Caco-2 (cell line): ENCODE measurements at regions of chr22 and their contacts with region 1.

Region 1: DNA sequence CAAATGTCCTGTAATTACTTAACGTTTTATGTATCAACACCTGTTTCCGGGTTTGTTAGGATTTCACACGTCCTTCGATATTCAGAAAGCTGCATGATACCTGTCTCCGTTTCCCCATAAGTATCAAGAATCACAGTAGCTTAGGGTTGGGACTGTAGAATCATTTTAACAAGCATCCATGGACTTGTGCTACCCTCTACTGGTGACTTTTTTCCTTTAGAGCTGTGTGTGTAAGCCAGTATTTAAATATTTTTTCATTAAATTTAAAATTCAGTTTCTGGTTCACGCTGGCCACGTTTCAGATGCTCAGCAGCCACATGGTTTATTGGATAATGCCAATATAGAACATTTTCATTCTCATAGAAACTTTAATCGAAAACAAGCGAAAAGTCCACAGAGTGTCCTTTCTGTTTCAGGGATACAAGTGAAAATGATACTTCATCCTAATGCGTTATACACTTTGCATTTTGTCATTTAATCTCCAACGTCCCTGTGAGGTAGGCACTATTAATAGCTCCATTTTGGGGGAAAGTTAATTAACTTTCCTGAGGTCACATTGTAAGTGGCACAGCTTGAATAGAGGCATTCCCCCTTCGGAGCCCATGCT is 61.5 kb upstream of the SLC25A18 start:
- DNase-seq: peak in 1 of 2 experiments; percentile 64
- H3K4me3 ChIP-seq: no peak overlapping the region
- H3K4me3 Mint-ChIP-seq: no peak overlapping the region
- H3K27ac Mint-ChIP-seq: no peak overlapping the region
- H3K4me1 ChIP-seq: no peaks in the 10 kb centered on the region
- H3K4me1 Mint-ChIP-seq: no peaks in the 10 kb centered on the region
- H3K27me3 ChIP-seq: no peaks in the 10 kb centered on the region
- H3K27me3 Mint-ChIP-seq: peaks cover 3% of the 10 kb centered on the region
- CTCF ChIP-seq: peak; percentile 62 to 64

Region 2: GRCh38 chr22:17074648-17075002 is 427.2 kb before region 1 on chr22:
- CTCF ChIA-PET with region 1: interaction called, 12 read pairs
- POLR2A ChIA-PET with region 1: no interaction called
- intact Hi-C with region 1: loop called (anchors 1 kb)
- DNase-seq: no peak
- H3K4me3 ChIP-seq: no peak overlapping the region
- H3K4me3 Mint-ChIP-seq: no peak overlapping the region
- H3K27ac Mint-ChIP-seq: no peak overlapping the region
- H3K4me1 ChIP-seq: no peaks in the 10 kb centered on the region
- H3K4me1 Mint-ChIP-seq: no peaks in the 10 kb centered on the region
- H3K27me3 ChIP-seq: no peaks in the 10 kb centered on the region
- H3K27me3 Mint-ChIP-seq: peaks cover 4% of the 10 kb centered on the region
- CTCF ChIP-seq: no peak

Region 3: GRCh38 chr22:17201285-17201945 is 300.4 kb before region 1 on chr22:
- CTCF ChIA-PET with region 1: interaction called, 15 read pairs
- POLR2A ChIA-PET with region 1: no interaction called
- intact Hi-C with region 1: loop called (anchors 1 kb)
- DNase-seq: peak in 1 of 2 experiments; percentile 12
- H3K4me3 ChIP-seq: no peak overlapping the region
- H3K4me3 Mint-ChIP-seq: no peak overlapping the region
- H3K27ac Mint-ChIP-seq: no peak overlapping the region
- H3K4me1 ChIP-seq: no peaks in the 10 kb centered on the region
- H3K4me1 Mint-ChIP-seq: peaks cover 7% of the 10 kb centered on the region
- H3K27me3 ChIP-seq: no peaks in the 10 kb centered on the region; the same call in 1 of the 2 replicates
- H3K27me3 Mint-ChIP-seq: peaks cover 3% of the 10 kb centered on the region
- CTCF ChIP-seq: peak in 1 of 2 experiments; percentile 30

Region 4: DNA sequence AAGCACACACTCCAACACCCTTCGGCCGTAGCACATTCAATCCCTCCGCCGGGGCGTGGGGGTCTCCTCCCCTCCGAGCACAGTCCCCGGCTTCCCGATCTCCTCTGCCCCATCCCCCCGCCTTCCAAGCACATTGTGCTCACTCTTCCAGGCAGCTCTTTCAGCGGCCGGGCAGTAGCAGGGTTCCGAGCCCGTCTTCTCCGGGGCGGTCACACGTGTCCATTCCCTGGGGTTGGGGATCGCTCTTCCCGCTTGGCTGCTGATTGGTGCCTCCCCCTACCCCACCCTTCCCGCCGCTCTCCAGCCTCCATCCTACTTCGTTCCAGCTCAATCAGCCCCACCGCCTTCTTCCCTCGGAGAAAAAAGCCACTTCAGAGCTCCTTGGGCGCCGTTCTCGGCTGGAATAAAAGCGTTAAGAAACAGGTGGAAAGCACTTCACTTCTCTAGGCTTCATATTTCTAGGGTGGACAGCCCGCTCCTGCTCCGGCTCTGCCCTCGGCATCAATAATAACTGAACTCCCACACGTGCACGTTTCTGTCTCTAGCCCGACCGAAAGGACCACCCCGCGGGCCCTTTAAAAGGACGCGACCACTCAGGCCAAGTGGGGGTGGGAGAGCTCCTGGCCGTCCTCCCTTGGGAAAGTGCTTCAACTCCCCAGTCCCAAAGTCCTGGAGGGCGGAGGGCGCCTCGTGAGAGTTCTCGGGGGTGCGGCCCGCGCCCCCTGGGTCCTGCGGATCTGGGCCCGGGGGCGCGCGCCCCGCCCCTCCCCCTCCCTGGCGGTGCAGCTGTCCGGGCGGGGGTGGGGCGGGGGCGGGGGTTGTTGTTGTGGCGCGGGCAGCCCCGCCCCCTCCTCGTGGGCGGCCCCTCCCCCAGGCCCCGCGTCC is 133.0 kb before region 1 on chr22:
- CTCF ChIA-PET with region 1: interaction called, 23 read pairs
- POLR2A ChIA-PET with region 1: no interaction called
- intact Hi-C with region 1: loop called (anchors 1 kb)
- DNase-seq: peak; percentile 36 to 39
- H3K4me3 ChIP-seq: peak overlapping the region; percentile 45
- H3K4me3 Mint-ChIP-seq: peak overlapping the region; percentile 77
- H3K27ac Mint-ChIP-seq: no peak overlapping the region
- H3K4me1 ChIP-seq: no peaks in the 10 kb centered on the region
- H3K4me1 Mint-ChIP-seq: peaks cover 18% of the 10 kb centered on the region
- H3K27me3 ChIP-seq: no peaks in the 10 kb centered on the region; the same call in 1 of the 2 replicates
- H3K27me3 Mint-ChIP-seq: peaks cover 28% of the 10 kb centered on the region
- CTCF ChIP-seq: no peak

Region 5: GRCh38 chr22:17436382-17436980 is 65.3 kb before region 1 on chr22:
- CTCF ChIA-PET with region 1: no interaction called
- POLR2A ChIA-PET with region 1: no interaction called
- intact Hi-C with region 1: no loop called
- DNase-seq: no peak
- H3K4me3 ChIP-seq: no peak overlapping the region
- H3K4me3 Mint-ChIP-seq: no peak overlapping the region
- H3K27ac Mint-ChIP-seq: no peak overlapping the region
- H3K4me1 ChIP-seq: no peaks in the 10 kb centered on the region
- H3K4me1 Mint-ChIP-seq: no peaks in the 10 kb centered on the region
- H3K27me3 ChIP-seq: no peaks in the 10 kb centered on the region
- H3K27me3 Mint-ChIP-seq: no peaks in the 10 kb centered on the region
- CTCF ChIP-seq: no peak